ENCODE measurements at regions of chr17 and their contacts with region 1.

Region 1: GRCh38 chr17:27544350-27545131 is 86.4 kb upstream of the LGALS9 start:
- DNase-seq: peak; percentile 96
- ATAC-seq: peak; percentile 86
- H3K4me3 ChIP-seq: no peak overlapping the region
- H3K27ac ChIP-seq: peak overlapping the region; percentile 48; the same call in 1 of the 2 replicates
- H3K4me1 ChIP-seq: peaks cover 68% of the 10 kb centered on the region
- H3K27me3 ChIP-seq: no peaks in the 10 kb centered on the region
- CTCF ChIP-seq: peak; percentile 12 to 31 (median 23); a peak in 4 of 6 replicates
- EP300 ChIP-seq: peak; percentile 90 to 95
- POLR2A ChIP-seq: no peak
- RAD21 ChIP-seq: no peak

Region 2: GRCh38 chr17:27353461-27354050 is 191.0 kb before region 1 on chr17:
- CTCF ChIA-PET with region 1: no interaction called
- POLR2A ChIA-PET with region 1: no interaction called
- RAD21 ChIA-PET with region 1: no interaction called
- SMC1A ChIA-PET with region 1: no interaction called
- in situ Hi-C with region 1: loop called (anchors 5 kb)
- intact Hi-C with region 1: loop called (anchors 10 kb)
- DNase-seq: peak; percentile 42
- ATAC-seq: peak; percentile 94
- H3K4me3 ChIP-seq: peak overlapping the region; percentile 73
- H3K27ac ChIP-seq: peak overlapping the region; percentile 70
- H3K4me1 ChIP-seq: peaks cover 7% of the 10 kb centered on the region
- H3K27me3 ChIP-seq: no peaks in the 10 kb centered on the region
- CTCF ChIP-seq: peak; percentile 63 to 93 (median 89); a peak in 4 of 6 replicates
- EP300 ChIP-seq: peak in 1 of 2 experiments; percentile 39; a peak in 2 of 4 replicates
- POLR2A ChIP-seq: peak; percentile 85
- RAD21 ChIP-seq: peak; percentile 73

Region 3: GRCh38 chr17:27466743-27467375 is 77.7 kb before region 1 on chr17:
- CTCF ChIA-PET with region 1: interaction called, 8 read pairs
- POLR2A ChIA-PET with region 1: interaction called, 23 read pairs
- RAD21 ChIA-PET with region 1: interaction called, 113 read pairs
- SMC1A ChIA-PET with region 1: interaction called, 120 read pairs
- in situ Hi-C with region 1: loop called (anchors 5 kb)
- intact Hi-C with region 1: loop called (anchors 1 kb)
- DNase-seq: peak; percentile 87
- ATAC-seq: peak; percentile 79
- H3K4me3 ChIP-seq: peak overlapping the region; percentile 54
- H3K27ac ChIP-seq: peak overlapping the region; percentile 92
- H3K4me1 ChIP-seq: peaks cover 67% of the 10 kb centered on the region
- H3K27me3 ChIP-seq: no peaks in the 10 kb centered on the region
- CTCF ChIP-seq: 0 out of 6 replicates have a peak, but pooled peaks of 1 of the 3 experiments have one; percentile 4
- EP300 ChIP-seq: peak; percentile 26 to 90; a peak in 3 of 4 replicates
- POLR2A ChIP-seq: peak; percentile 47; the same call in 1 of the 2 replicates
- RAD21 ChIP-seq: no peak; the same call in 1 of the 2 replicates

Region 4: DNA sequence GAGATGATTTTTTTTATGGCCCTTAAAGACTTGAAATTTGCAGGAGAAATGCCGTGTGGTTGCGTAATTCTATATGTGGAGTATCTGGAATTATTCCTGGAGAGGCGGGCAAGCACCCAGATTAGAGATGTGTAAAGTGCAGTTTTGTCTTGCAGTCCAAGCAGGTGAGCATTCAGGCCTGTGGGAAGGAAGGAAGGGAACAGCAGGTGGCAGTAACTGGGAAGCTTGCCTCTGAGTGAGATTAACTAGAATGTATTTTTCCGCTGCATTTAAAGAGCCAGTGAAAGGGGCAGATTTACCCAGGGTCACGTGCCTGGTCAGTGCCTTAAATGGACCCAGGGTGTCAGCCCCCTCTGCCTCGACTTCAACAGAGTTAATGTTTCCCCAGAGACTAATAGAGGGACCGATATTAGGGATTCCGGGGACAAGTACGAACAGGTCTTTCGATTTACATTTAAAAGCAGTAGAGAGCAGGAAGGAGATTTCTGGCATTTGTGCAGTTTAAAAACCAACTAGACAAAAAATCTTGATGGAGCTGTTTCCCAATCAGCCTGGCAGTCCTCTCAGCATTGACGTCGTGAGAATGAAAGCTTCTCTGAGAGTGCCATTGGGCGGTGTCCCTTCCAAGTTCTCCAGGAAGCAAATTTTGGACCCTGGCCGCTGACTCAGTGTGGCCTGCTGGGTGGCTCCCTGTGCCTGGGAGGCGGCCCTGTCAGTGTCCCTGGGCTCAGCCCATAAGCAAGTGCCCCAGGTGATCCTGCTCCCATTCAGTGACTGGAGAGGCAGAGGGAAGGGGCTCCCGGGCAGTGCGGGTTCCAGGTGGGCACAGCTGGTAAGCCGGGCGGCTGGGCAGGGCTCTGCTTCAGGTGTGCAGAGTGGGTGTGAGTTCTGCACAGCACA is 50.1 kb before region 1 on chr17:
- CTCF ChIA-PET with region 1: interaction called, 3 read pairs
- POLR2A ChIA-PET with region 1: interaction called, 5 read pairs
- RAD21 ChIA-PET with region 1: interaction called, 16 read pairs
- SMC1A ChIA-PET with region 1: interaction called, 56 read pairs
- in situ Hi-C with region 1: no loop called
- intact Hi-C with region 1: no loop called
- DNase-seq: no peak
- ATAC-seq: no peak; the same call in 2 of the 3 replicates
- H3K4me3 ChIP-seq: no peak overlapping the region
- H3K27ac ChIP-seq: peak overlapping the region; percentile 80; the same call in 1 of the 2 replicates
- H3K4me1 ChIP-seq: peaks cover 43% of the 10 kb centered on the region
- H3K27me3 ChIP-seq: no peaks in the 10 kb centered on the region
- CTCF ChIP-seq: peak in 1 of 3 experiments; percentile 24; a peak in 2 of 6 replicates
- EP300 ChIP-seq: no peak
- POLR2A ChIP-seq: no peak
- RAD21 ChIP-seq: no peak

Region 5: GRCh38 chr17:27526604-27527230 is 17.8 kb before region 1 on chr17:
- CTCF ChIA-PET with region 1: interaction called, 9 read pairs
- POLR2A ChIA-PET with region 1: interaction called, 4 read pairs
- RAD21 ChIA-PET with region 1: interaction called, 62 read pairs
- SMC1A ChIA-PET with region 1: interaction called, 77 read pairs
- in situ Hi-C with region 1: no loop called
- intact Hi-C with region 1: loop called (anchors 2 kb)
- DNase-seq: no peak
- ATAC-seq: peak; percentile 84
- H3K4me3 ChIP-seq: no peak overlapping the region
- H3K27ac ChIP-seq: no peak overlapping the region
- H3K4me1 ChIP-seq: peaks cover 18% of the 10 kb centered on the region
- H3K27me3 ChIP-seq: no peaks in the 10 kb centered on the region
- CTCF ChIP-seq: no peak
- EP300 ChIP-seq: no peak
- POLR2A ChIP-seq: no peak
- RAD21 ChIP-seq: no peak

Region 6: GRCh38 chr17:27578718-27579085 is 34.2 kb after region 1 on chr17:
- CTCF ChIA-PET with region 1: interaction called, 6 read pairs
- POLR2A ChIA-PET with region 1: interaction called, 4 read pairs
- RAD21 ChIA-PET with region 1: interaction called, 22 read pairs
- SMC1A ChIA-PET with region 1: interaction called, 20 read pairs
- in situ Hi-C with region 1: no loop called
- intact Hi-C with region 1: no loop called
- DNase-seq: peak; percentile 57
- ATAC-seq: peak; percentile 94
- H3K4me3 ChIP-seq: no peak overlapping the region
- H3K27ac ChIP-seq: peak overlapping the region; percentile 67
- H3K4me1 ChIP-seq: peaks cover 30% of the 10 kb centered on the region
- H3K27me3 ChIP-seq: no peaks in the 10 kb centered on the region
- CTCF ChIP-seq: peak in 2 of 3 experiments; percentile 13 to 23; a peak in 2 of 6 replicates
- EP300 ChIP-seq: peak; percentile 53 to 82; a peak in 3 of 4 replicates
- POLR2A ChIP-seq: no peak
- RAD21 ChIP-seq: 0 out of 2 replicates have a peak, but pooled peaks have one; percentile 7